Activated B cell treated with CpG ODN at 0.5 μM for 24 hours (primary cell): ENCODE measurements at regions of chr11 and their contacts with region 1.

Region 1: DNA sequence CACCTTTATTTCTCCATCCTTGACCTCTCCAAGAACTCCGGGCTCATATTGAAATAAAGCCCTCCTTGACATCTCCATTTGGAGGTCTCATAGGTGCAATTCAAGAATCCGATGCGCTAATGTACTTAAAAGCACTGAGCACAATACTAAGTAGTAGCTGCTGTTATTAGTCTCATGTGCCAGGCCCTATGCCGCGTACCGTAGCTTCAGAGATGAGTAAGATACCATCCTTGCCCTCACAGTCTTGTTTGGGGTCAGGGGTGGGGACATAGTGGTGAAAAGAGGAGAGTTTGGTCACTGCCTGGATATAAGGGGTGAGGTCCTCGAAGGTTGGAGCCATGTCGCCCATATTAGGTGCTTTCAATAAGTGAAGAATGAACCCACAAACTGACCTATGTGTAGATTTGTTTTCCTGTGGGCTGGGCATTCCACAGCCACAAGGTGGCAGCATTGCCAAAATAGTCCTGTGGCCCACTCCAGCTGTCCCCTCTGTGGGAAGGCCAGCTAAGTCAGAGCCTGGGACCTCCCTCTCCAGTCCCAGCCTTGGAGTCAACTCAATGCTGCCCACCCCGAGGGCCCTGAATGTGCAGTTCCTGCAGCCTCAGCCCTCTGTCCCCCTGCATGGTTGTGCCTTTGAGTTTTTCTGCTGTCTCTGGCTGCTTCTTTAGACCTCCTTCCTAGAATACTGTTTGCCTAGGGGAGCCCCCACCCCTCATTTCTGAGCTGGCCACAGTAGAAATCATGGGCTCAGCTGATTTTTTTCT is 6.5 kb downstream of the DCPS start:
- DNase-seq: peak; percentile 35
- ATAC-seq: peak; percentile 61
- H3K4me3 Mint-ChIP-seq: no peak overlapping the region
- H3K27ac Mint-ChIP-seq: no peak overlapping the region
- H3K4me1 Mint-ChIP-seq: peaks cover 35% of the 10 kb centered on the region
- H3K27me3 Mint-ChIP-seq: no peaks in the 10 kb centered on the region
- CTCF ChIP-seq: peak; percentile 30

Region 2: DNA sequence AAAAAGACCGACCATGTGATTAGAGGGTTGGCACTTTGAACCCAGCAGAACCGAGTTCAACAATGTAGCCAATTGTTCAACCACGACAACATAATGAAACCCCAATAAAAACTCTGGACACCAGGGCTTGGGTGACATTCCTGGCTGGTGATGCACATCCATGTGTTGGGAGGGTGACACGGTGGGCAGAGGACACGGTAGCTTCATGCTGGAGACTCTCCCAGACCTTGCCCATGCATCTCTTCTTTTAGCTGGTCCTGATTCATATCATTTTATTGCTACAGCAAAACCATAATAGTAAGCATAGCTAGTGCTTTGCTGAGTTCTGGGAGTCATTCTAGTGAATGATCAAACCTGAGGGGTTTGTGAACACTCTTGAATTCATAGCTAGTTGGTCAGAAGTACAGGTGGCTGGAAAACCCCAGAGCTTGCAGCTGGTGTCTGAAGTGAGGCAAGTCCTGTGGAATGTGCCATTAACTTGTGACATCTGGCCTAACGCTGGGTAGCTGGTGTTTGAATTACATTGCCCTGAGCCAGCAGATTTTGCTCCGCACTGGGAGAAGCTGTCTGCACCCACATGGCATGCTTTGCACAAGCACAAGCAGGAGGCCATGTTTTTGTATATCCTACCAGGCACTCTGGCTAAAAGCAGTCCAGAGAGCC is 113.0 kb before region 1 on chr11:
- CTCF ChIA-PET with region 1: no interaction called
- POLR2A ChIA-PET with region 1: no interaction called
- intact Hi-C with region 1: no loop called
- DNase-seq: no peak
- ATAC-seq: no peak
- H3K4me3 Mint-ChIP-seq: no peak overlapping the region
- H3K27ac Mint-ChIP-seq: no peak overlapping the region
- H3K4me1 Mint-ChIP-seq: no peaks in the 10 kb centered on the region
- H3K27me3 Mint-ChIP-seq: no peaks in the 10 kb centered on the region
- CTCF ChIP-seq: no peak

Region 3: GRCh38 chr11:126355324-126355925 is 45.0 kb after region 1 on chr11 and contains the start of gene ST3GAL4:
- CTCF ChIA-PET with region 1: interaction called, 3 read pairs
- POLR2A ChIA-PET with region 1: no interaction called
- intact Hi-C with region 1: loop called (anchors 5 kb)
- DNase-seq: peak; percentile 44
- ATAC-seq: peak; percentile 66
- H3K4me3 Mint-ChIP-seq: peak within 1 kb of the TSS; percentile 85
- H3K27ac Mint-ChIP-seq: no peak within 1 kb of the TSS
- H3K4me1 Mint-ChIP-seq: peaks cover 15% of the 10 kb centered on the region
- H3K27me3 Mint-ChIP-seq: no peaks in the 10 kb centered on the region
- CTCF ChIP-seq: no peak
- total RNA-seq, gene ST3GAL4: 0.71 and 1.0 TPM in 2 replicates